Heart left ventricle (tissue), 16 donors: ENCODE measurements at regions of chr7 and their contacts with region 1.

Region 1: DNA sequence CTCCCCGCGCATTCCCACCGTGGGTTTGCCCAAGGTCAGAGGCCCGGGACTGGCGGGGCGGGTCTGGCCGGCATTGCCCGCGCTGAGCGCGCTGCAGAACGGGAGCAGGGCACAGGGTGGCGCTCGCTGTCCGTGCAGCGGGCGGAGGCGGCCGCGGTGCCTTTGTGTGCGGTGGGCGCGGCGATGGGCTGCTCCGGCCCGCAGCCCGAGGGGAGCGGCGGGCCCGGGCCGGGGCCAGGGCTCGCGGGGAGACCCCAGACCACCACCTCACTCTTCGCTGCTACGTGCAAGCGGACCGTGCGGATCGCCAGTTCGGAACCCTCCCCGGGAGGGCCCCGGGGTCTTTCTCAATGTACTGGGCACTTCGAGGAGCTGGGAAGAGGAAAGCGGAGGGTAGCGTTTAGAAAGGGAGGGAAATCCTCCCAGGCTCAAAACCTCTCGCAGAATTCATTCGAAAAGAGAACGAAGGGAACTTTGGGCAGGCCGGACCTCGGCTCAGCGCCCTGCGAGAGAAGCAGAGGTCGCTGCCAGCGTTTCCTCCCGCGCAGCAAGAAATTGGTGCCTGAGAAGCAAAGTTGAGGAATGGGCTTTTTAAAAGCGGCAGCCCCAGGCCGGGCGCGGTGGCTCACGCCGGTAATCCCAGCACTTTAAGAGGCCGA is 8.5 kb downstream of the SP8 start:
- DNase-seq: no peak
- ATAC-seq: peak in 3 of 4 donors; percentile 85 to 95 (median 92)
- H3K4me3 ChIP-seq: peak overlapping the region in 9 of 12 donors; percentile 9 to 43 (median 34)
- H3K27ac ChIP-seq: no peak overlapping the region
- H3K4me1 ChIP-seq: peaks cover 0 to 11% (median 5%) of the 10 kb centered on the region in 12 donors
- H3K27me3 ChIP-seq: peaks cover 38 to 100% (median 95%) of the 10 kb centered on the region in 9 donors
- CTCF ChIP-seq: peak in 11 of 12 donors; percentile 31 to 66 (median 44)
- POLR2A ChIP-seq: no peak

Region 2: GRCh38 chr7:20402747-20403230 is 375.4 kb before region 1 on chr7:
- intact Hi-C with region 1: no loop called
- DNase-seq: no peak
- ATAC-seq: no peak
- H3K4me3 ChIP-seq: no peak overlapping the region
- H3K27ac ChIP-seq: no peak overlapping the region
- H3K4me1 ChIP-seq: peaks cover 0 to 31% (median 10%) of the 10 kb centered on the region in 12 donors
- H3K27me3 ChIP-seq: no peaks in the 10 kb centered on the region
- CTCF ChIP-seq: peak in 10 of 12 donors; percentile 15 to 50 (median 36)
- POLR2A ChIP-seq: no peak

Region 3: GRCh38 chr7:20798081-20798693 is 20.0 kb after region 1 on chr7:
- intact Hi-C with region 1: no loop called
- DNase-seq: peak in 2 of 5 donors; percentile 29 to 65
- ATAC-seq: peak in 3 of 4 donors; percentile 52 to 90 (median 69)
- H3K4me3 ChIP-seq: peak overlapping the region; percentile 14 to 60 (median 46)
- H3K27ac ChIP-seq: no peak overlapping the region
- H3K4me1 ChIP-seq: peaks cover 0 to 23% (median 7%) of the 10 kb centered on the region in 12 donors
- H3K27me3 ChIP-seq: peaks cover 53 to 89% (median 76%) of the 10 kb centered on the region in 9 donors
- CTCF ChIP-seq: no peak
- POLR2A ChIP-seq: no peak

Region 4: DNA sequence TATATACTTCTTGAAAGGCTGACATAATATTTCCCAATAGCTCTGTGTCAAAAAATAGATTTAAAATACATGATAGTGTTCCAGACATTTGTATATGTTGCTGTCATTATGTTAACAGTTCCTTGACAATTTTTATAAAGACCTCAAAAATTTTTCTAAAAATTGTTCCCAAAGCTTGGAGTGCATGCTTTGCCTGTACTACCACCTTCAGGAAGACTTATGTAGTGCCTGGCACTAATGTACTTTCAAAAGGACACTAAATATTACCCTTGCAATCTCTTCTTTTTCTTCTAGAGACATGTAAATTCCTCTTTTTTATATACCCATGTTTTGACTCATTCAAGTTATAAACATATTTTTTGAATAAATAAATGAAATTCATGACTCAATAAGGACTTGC is 56.5 kb after region 1 on chr7:
- intact Hi-C with region 1: no loop called
- DNase-seq: no peak
- ATAC-seq: no peak
- H3K4me3 ChIP-seq: no peak overlapping the region
- H3K27ac ChIP-seq: no peak overlapping the region
- H3K4me1 ChIP-seq: no peaks in the 10 kb centered on the region
- H3K27me3 ChIP-seq: peaks cover 0 to 11% (median 0%) of the 10 kb centered on the region in 9 donors
- CTCF ChIP-seq: no peak
- POLR2A ChIP-seq: no peak

Region 5: GRCh38 chr7:21427182-21427870 is 649.1 kb after region 1 on chr7:
- intact Hi-C with region 1: loop called in 1 of 10 experiments (anchors 10 kb)
- DNase-seq: peak; percentile 99 to 100 (median 99)
- ATAC-seq: peak; percentile 94 to 95 (median 94)
- H3K4me3 ChIP-seq: peak overlapping the region; percentile 42 to 98 (median 88)
- H3K27ac ChIP-seq: peak overlapping the region; percentile 60 to 99 (median 94)
- H3K4me1 ChIP-seq: peaks cover 0 to 46% (median 34%) of the 10 kb centered on the region in 12 donors
- H3K27me3 ChIP-seq: no peaks in the 10 kb centered on the region
- CTCF ChIP-seq: peak in 7 of 12 donors; percentile 4 to 43 (median 20)
- POLR2A ChIP-seq: peak in 1 of 2 donors; percentile 69

Region 6: DNA sequence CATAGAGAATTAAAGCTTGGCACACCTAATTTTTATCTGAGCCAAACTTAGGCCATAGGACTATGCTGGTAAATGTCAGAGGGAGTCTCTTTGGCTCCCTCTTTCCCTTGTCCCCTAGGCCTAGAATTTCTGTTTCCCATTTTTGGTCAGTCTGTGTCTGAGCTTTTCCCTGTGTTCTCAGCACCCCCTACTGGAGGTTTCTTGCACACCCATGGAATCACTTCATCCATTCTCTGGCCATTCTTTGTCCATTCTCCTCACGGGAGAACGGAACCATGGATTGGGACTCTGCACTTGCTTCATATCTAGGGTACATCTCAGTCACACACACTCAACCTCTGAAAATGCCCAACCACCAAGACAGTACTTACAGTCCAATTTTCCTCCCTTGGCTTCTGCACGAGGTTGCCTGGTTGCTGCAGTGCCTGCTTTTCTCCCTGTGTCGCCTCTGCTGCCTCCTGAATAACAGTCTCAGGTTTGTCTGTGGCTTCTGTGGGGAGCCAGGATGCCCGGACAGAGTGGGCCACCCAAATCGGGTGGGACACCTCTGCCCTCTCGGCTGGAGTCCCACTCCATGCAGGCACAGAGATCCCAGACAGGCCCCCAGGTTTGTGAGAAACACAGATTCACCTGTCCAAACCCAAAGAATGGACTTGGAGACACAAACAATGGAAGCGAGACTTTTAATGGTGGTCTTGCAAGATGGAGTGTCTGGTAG is 729.6 kb after region 1 on chr7:
- intact Hi-C with region 1: loop called in 5 of 10 experiments (anchors 5 to 10 kb)
- DNase-seq: peak in 3 of 5 donors; percentile 9 to 33 (median 21)
- ATAC-seq: peak; percentile 47 to 72 (median 66)
- H3K4me3 ChIP-seq: no peak overlapping the region
- H3K27ac ChIP-seq: no peak overlapping the region
- H3K4me1 ChIP-seq: no peaks in the 10 kb centered on the region
- H3K27me3 ChIP-seq: no peaks in the 10 kb centered on the region
- CTCF ChIP-seq: peak; percentile 54 to 80 (median 66)
- POLR2A ChIP-seq: no peak

Region 7: DNA sequence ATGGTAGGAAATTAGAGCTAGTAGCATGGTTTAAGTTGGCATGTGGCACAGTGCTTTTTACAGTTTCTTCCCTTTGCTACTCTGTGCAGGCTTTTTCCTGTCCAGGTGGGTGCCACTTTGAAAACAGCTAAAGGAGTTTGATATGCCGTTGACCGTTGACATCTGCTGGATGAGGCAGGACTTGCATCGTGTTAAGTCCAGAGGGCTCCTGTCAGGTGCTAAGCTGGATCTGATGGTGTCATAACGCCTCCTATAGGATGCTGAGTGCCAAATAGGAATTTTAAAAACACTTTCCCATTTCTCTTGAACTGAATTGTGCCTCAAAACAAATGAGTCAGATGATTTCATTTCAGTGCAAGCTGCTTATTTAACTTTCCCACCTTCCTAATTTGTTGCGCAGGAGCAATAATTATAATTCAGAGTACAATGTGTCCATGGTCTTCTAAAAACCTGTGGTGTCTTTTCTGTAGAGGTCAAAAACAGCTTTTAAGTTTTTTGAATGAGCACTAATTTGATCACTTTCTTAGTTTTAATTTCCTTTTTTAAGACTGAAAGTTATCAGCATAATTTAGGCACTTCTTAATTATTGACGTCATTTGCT is 989.2 kb after region 1 on chr7:
- intact Hi-C with region 1: loop called in 2 of 10 experiments (anchors 5 kb)
- DNase-seq: peak in 4 of 5 donors; percentile 15 to 47 (median 32)
- ATAC-seq: peak; percentile 66 to 94 (median 90)
- H3K4me3 ChIP-seq: no peak overlapping the region
- H3K27ac ChIP-seq: no peak overlapping the region
- H3K4me1 ChIP-seq: peaks cover 0 to 17% (median 2%) of the 10 kb centered on the region in 12 donors
- H3K27me3 ChIP-seq: peaks cover 0 to 5% (median 0%) of the 10 kb centered on the region in 9 donors
- CTCF ChIP-seq: peak in 10 of 12 donors; percentile 31 to 62 (median 47)
- POLR2A ChIP-seq: no peak

Region 8: DNA sequence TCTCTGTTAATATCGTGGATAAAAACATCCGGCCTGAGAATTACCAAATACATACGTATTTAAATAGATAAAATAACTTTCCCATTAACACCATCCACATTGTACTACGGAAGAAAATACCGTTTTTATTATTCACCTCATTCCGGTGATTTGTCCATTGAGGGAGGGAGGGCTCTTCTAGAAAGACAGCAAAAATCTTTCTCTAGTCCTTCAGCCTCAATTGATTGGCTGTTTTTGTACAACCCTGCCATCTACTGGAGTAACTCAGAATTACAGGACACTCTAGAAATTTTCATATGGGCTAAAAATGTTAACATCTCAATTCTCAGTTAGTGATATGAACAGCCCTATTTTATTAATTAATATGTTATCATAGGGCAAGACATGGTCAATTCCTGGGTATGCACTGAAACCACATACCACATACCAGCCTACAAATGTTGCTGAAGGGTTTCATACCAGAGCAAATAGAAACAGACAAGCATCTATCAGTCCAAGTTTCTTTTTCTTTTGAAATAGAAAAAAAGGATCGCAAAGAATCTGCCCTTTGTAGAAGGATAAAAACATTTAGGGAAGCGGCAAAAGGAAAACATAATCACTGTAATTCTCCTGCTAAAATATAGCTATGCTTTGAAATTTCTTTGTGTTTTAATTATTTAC is 1223.3 kb after region 1 on chr7:
- intact Hi-C with region 1: loop called in 1 of 10 experiments (anchors 5 kb)
- DNase-seq: no peak
- ATAC-seq: peak in 3 of 4 donors; percentile 44 to 59 (median 47)
- H3K4me3 ChIP-seq: peak overlapping the region in 2 of 12 donors; percentile 1 to 20
- H3K27ac ChIP-seq: no peak overlapping the region
- H3K4me1 ChIP-seq: peaks cover 0 to 3% (median 0%) of the 10 kb centered on the region in 12 donors
- H3K27me3 ChIP-seq: peaks cover 0 to 8% (median 0%) of the 10 kb centered on the region in 9 donors
- CTCF ChIP-seq: peak; percentile 67 to 87 (median 79)
- POLR2A ChIP-seq: no peak

Region 9: GRCh38 chr7:22082886-22083703 is 1304.9 kb after region 1 on chr7:
- intact Hi-C with region 1: loop called in 1 of 10 experiments (anchors 10 kb)
- DNase-seq: peak; percentile 87 to 94 (median 90)
- ATAC-seq: peak; percentile 89 to 99 (median 98)
- H3K4me3 ChIP-seq: peak overlapping the region; percentile 41 to 81 (median 66)
- H3K27ac ChIP-seq: peak overlapping the region; percentile 15 to 87 (median 80)
- H3K4me1 ChIP-seq: peaks cover 0 to 17% (median 7%) of the 10 kb centered on the region in 12 donors
- H3K27me3 ChIP-seq: peaks cover 0 to 24% (median 0%) of the 10 kb centered on the region in 9 donors
- CTCF ChIP-seq: peak; percentile 94 to 99 (median 98)
- POLR2A ChIP-seq: no peak